Prostate gland (tissue), 2 donors: ENCODE measurements at regions of chr3 and their contacts with region 1.

Region 1: DNA sequence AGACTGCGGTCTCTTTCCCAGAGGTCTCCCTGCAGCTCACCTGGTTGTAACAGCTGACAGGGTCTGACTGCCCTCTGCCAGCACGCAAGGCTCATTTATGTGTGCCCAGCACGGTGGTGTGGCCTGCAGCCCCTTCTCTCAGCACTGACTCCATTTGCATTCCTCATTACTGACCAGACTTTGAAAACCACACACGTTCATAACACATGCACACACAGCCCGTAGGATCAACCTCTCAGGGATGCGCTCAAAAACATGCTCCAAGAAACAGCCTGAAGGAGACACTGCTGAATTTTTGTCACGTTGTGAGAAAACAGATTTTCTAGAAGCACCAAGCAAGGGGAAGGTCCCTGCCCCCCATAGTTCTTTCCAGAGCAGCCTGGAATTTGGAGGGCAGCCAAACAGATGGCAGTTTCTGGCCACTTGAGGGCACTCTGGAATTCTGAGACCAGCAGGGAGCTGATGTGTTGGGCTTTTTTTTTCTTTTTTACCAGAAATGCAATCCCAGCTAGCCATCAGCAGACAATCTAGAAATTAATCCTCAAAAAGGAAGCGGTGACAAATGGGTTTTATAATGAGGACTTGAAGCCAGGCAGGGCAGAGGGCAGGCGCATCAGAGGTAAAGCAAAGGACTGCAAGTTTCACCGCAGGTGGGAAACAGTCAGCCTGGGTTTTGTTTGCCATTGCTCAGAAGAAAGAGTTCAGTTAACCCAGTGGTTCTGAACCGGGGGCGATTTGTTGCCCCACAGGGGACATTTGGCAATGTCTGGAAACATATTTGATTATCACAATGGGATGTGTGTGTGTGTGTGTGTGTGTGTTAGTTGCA is 170.5 kb upstream of the PROK2 start:
- DNase-seq: peak; percentile 67
- H3K4me3 ChIP-seq: no peak overlapping the region
- H3K27ac ChIP-seq: no peak overlapping the region
- H3K4me1 ChIP-seq: no peaks in the 10 kb centered on the region
- H3K27me3 ChIP-seq: no peaks in the 10 kb centered on the region
- CTCF ChIP-seq: peak; percentile 58 to 78 (median 69)
- POLR2A ChIP-seq: no peak

Region 2: GRCh38 chr3:71725279-71725991 is 230.0 kb before region 1 on chr3 and contains the start of gene EIF4E3:
- intact Hi-C with region 1: loop called (anchors 10 kb)
- DNase-seq: peak; percentile 12
- H3K4me3 ChIP-seq: peak within 1 kb of the TSS; percentile 75 to 77
- H3K27ac ChIP-seq: peak within 1 kb of the TSS; percentile 68 to 77
- H3K4me1 ChIP-seq: no peaks in the 10 kb centered on the region
- H3K27me3 ChIP-seq: no peaks in the 10 kb centered on the region
- CTCF ChIP-seq: no peak
- POLR2A ChIP-seq: no peak
- total RNA-seq, gene EIF4E3: 19.2 to 26.0 TPM

Region 3: GRCh38 chr3:71875461-71875947 is 80.0 kb before region 1 on chr3:
- intact Hi-C with region 1: loop called (anchors 10 kb)
- DNase-seq: peak; percentile 69
- H3K4me3 ChIP-seq: no peak overlapping the region
- H3K27ac ChIP-seq: no peak overlapping the region
- H3K4me1 ChIP-seq: peaks cover 3% of the 10 kb centered on the region
- H3K27me3 ChIP-seq: no peaks in the 10 kb centered on the region
- CTCF ChIP-seq: peak in 3 of 4 experiments; percentile 72 to 84 (median 79)
- POLR2A ChIP-seq: no peak

Region 4: GRCh38 chr3:73029321-73029796 is 1073.9 kb after region 1 on chr3:
- intact Hi-C with region 1: no loop called
- DNase-seq: no peak
- H3K4me3 ChIP-seq: no peak overlapping the region
- H3K27ac ChIP-seq: no peak overlapping the region
- H3K4me1 ChIP-seq: no peaks in the 10 kb centered on the region
- H3K27me3 ChIP-seq: no peaks in the 10 kb centered on the region
- CTCF ChIP-seq: no peak
- POLR2A ChIP-seq: no peak